PC-9 (cell line): ENCODE measurements at regions of chr14 and their contacts with region 1.

Region 1: DNA sequence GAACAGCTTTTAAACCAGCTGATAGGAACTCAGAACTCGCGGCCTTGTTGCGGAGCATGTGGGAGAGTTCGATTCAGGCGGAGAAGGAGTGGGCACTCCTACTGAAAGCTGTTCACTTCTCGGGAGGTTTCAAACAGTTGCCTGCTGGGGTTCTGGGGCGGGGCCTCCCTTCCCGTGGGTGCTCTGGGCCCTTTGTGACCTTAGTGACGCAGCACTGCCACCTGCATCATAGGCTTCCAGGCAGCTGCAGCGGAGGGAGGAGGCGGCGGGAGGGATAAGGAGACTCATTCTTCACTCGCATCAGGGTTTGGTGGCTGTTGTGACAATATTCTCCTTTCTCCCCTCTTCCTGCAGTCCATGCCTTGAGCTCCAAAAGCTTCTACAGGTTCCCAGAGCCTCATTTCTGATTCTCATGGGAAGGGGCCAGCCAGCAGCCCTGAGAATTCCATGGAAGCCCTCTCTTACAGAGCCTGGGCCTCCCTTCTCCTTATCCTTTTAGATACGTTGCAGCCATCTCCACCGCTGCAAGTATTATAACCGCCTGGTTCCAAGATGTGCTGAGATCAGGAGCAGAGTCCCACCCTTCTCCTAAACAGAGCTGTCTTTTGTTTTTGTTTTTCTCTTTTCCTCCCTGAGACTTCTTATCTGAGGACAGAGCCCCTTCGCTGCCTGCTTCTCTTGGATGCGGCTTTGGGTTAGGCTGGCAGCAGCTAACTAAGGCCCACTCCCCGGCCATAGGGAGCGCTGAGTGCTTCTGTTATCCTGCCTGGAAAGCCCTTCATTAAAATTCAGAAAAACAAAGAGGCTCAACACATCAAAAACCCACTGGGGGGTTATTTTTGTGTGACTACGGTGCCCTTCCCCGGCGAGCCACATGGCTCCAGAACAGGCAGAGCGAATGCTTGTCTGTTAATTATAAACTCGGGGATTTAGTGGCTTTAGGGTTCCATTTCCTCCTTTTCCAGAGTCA is 67.6 kb upstream of the GPATCH2L start:
- DNase-seq: no peak
- H3K4me3 ChIP-seq: no peak overlapping the region
- H3K27ac ChIP-seq: no peak overlapping the region
- H3K4me1 ChIP-seq: no peaks in the 10 kb centered on the region
- H3K27me3 ChIP-seq: peaks cover 16% of the 10 kb centered on the region
- CTCF ChIP-seq: no peak

Region 2: GRCh38 chr14:76067536-76067935 is 16.5 kb before region 1 on chr14:
- CTCF ChIA-PET with region 1: no interaction called
- POLR2A ChIA-PET with region 1: no interaction called
- intact Hi-C with region 1: no loop called
- DNase-seq: no peak
- H3K4me3 ChIP-seq: no peak overlapping the region
- H3K27ac ChIP-seq: no peak overlapping the region
- H3K4me1 ChIP-seq: no peaks in the 10 kb centered on the region
- H3K27me3 ChIP-seq: no peaks in the 10 kb centered on the region
- CTCF ChIP-seq: no peak

Region 3: GRCh38 chr14:76100236-76100635 is 16.2 kb after region 1 on chr14:
- CTCF ChIA-PET with region 1: no interaction called
- POLR2A ChIA-PET with region 1: no interaction called
- intact Hi-C with region 1: no loop called
- DNase-seq: no peak
- H3K4me3 ChIP-seq: no peak overlapping the region
- H3K27ac ChIP-seq: no peak overlapping the region
- H3K4me1 ChIP-seq: no peaks in the 10 kb centered on the region
- H3K27me3 ChIP-seq: peaks cover 78% of the 10 kb centered on the region
- CTCF ChIP-seq: no peak

Region 4: GRCh38 chr14:76525106-76525821 is 441.2 kb after region 1 on chr14:
- CTCF ChIA-PET with region 1: interaction called, 10 read pairs
- POLR2A ChIA-PET with region 1: no interaction called
- intact Hi-C with region 1: no loop called
- DNase-seq: no peak
- H3K4me3 ChIP-seq: no peak overlapping the region
- H3K27ac ChIP-seq: no peak overlapping the region
- H3K4me1 ChIP-seq: no peaks in the 10 kb centered on the region
- H3K27me3 ChIP-seq: peaks cover 63% of the 10 kb centered on the region
- CTCF ChIP-seq: no peak